Activated CD8-positive, alpha-beta T cell treated with anti-CD3 and anti-CD28 coated beads for 36 hours (primary cell): ENCODE measurements at regions of chr2 and their contacts with region 1.

Region 1: DNA sequence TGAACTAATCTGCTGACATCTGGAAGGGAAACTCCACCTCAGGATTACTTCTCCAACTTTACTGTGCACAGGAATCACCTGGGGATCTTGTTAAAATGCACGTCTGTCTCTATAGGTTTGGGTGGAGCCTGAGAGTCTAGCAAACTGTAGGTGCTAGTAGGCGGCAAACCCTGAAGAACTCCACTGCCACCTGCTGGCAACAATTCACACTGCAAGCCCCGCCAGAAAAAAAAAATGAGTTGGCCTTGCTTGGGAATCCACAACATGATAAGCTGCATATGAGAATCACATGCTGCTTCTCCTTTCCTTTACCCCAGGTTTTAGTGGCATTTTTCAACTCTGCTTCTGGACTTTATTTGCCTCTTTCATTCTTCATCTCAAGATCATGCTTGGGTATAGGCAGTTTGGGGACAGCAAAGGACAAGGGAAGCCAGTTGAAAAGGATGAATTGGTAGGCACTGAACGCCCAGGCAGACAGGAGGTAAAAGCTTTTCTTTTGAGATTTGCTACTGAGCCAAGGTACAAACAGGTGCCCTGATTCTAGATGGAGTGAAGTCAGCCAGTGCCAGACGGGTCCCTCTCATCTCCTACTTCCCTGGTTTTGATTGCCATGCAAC is 88.8 kb downstream of the VIT start:
- DNase-seq: peak; percentile 75
- ATAC-seq: peak; percentile 92
- H3K4me3 Mint-ChIP-seq: no peak overlapping the region
- H3K27ac Mint-ChIP-seq: no peak overlapping the region
- H3K4me1 Mint-ChIP-seq: no peaks in the 10 kb centered on the region
- H3K27me3 Mint-ChIP-seq: peaks cover 9% of the 10 kb centered on the region
- CTCF ChIP-seq: peak; percentile 92

Region 2: DNA sequence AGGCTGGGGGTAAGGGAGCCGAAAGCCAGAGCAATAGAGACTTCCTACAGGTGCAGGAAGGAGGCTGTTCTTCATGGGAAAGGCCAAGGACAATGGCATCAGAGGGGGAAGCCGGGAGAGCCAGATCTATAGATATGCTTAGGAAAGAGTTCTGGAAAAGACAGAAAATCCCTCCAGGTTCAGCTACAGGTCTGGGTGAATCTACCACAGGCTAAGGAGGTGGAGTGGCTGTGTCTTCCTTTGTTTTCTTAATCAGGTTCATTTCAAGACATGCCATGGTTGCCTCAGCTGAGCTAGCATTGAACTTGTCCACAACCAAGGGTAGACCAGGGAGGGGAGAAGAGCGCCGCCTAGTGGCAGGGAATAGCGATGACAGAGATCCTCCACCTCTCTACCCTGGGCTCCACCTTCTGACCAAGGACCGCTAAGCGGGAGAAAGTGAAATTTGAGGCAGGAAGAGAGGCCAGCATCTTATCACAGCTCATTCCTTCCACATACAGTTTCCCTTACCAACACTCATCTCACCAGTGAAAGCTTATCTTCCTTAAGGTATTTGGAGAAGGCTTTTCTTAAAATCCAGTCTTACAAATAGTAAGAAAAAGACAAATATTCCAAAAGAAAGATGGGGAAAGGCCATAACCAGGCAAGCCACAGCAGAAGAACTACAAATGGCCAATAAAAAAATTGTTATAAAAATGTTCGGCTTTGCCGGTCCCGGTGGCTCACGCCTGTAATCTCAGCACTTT is 14.6 kb before region 1 on chr2:
- CTCF ChIA-PET with region 1: interaction called, 49 read pairs
- POLR2A ChIA-PET with region 1: interaction called, 3 read pairs
- intact Hi-C with region 1: no loop called
- DNase-seq: peak; percentile 64
- ATAC-seq: peak; percentile 74
- H3K4me3 Mint-ChIP-seq: no peak overlapping the region
- H3K27ac Mint-ChIP-seq: no peak overlapping the region
- H3K4me1 Mint-ChIP-seq: peaks cover 1% of the 10 kb centered on the region
- H3K27me3 Mint-ChIP-seq: no peaks in the 10 kb centered on the region
- CTCF ChIP-seq: peak; percentile 73

Region 3: DNA sequence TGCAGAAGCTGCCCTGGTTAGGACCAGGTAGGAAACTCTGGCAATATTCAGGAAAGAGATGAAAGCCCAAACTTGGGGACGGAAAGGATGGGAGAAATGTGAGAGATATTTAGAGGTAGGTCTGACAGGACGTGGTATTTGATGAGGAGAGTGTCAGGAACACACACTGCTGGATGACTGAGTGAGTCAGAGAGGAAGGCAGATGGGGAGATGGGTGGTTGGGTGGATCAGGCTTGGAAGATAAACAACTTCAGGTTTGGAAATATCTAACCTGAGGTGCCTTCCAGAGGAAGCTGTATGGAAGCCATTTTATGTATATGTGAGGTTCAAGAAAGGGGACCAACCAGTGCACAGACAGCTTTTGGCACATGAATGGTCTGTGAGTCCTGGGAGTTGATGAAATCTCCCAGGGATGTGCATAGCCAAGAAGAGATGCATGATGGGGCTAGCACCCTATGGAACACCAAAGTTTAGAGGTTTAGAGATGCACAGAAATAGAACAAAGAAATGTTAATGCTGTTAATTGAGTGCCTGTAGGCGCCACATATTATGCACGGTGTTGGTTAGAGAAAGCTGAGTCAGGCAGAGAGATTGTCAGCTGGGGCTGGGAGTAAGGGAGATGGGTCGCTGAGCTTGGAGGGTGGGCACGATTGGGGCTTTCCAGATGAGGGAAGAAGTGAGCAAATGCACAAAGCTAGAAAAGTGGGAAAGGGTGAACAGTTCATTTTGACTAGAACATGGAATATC is 12.2 kb after region 1 on chr2:
- CTCF ChIA-PET with region 1: interaction called, 20 read pairs
- POLR2A ChIA-PET with region 1: no interaction called
- intact Hi-C with region 1: no loop called
- DNase-seq: no peak
- ATAC-seq: no peak
- H3K4me3 Mint-ChIP-seq: no peak overlapping the region
- H3K27ac Mint-ChIP-seq: no peak overlapping the region
- H3K4me1 Mint-ChIP-seq: peaks cover 3% of the 10 kb centered on the region
- H3K27me3 Mint-ChIP-seq: peaks cover 17% of the 10 kb centered on the region
- CTCF ChIP-seq: no peak

Region 4: DNA sequence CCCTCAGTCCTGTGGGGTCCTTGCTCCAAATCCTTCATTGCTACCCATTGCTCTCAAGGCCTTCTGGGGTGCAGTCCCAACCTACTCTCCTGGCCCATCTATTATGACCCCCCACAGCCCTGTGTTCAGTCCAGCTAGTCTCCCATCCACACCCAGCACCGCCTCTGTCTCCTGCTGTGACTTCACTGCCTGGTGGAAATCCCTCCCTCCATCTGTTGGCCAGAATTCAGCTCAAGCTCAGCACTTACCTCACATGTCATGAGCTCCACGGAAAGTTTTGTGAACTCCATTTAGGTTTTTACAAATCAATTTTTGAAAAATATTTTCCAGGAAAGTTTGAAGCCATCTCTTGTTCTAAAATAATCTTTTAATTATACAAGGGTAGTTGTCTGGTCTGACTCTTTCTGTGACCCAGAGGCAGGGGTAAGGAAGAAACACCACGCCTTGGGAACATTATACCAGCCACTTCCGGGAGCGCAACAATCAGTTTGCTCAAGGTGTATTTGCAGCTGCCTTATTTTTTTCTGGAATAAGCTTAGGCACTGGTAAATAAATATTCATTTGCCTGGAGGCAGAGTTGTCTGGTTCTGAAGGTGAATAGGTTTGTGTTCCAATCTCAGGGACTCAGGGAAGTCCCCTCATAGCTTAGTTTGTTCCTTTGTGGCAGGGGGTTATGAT is 22.1 kb after region 1 on chr2:
- CTCF ChIA-PET with region 1: interaction called, 16 read pairs
- POLR2A ChIA-PET with region 1: no interaction called
- intact Hi-C with region 1: no loop called
- DNase-seq: no peak
- ATAC-seq: no peak
- H3K4me3 Mint-ChIP-seq: no peak overlapping the region
- H3K27ac Mint-ChIP-seq: no peak overlapping the region
- H3K4me1 Mint-ChIP-seq: no peaks in the 10 kb centered on the region
- H3K27me3 Mint-ChIP-seq: no peaks in the 10 kb centered on the region
- CTCF ChIP-seq: no peak

Region 5: GRCh38 chr2:37005118-37005868 is 220.0 kb after region 1 on chr2:
- CTCF ChIA-PET with region 1: no interaction called
- POLR2A ChIA-PET with region 1: no interaction called
- intact Hi-C with region 1: loop called (anchors 5 kb)
- DNase-seq: no peak
- ATAC-seq: peak; percentile 42
- H3K4me3 Mint-ChIP-seq: no peak overlapping the region
- H3K27ac Mint-ChIP-seq: no peak overlapping the region
- H3K4me1 Mint-ChIP-seq: no peaks in the 10 kb centered on the region
- H3K27me3 Mint-ChIP-seq: no peaks in the 10 kb centered on the region
- CTCF ChIP-seq: no peak